ENCODE measurements at regions of chr12 and their contacts with region 1.

Region 1: GRCh38 chr12:107558141-107558815 is 127.3 kb upstream of the PWP1 start:
- DNase-seq: no peak
- ATAC-seq: no peak
- H3K4me3 ChIP-seq: no peak overlapping the region
- H3K27ac ChIP-seq: no peak overlapping the region
- H3K4me1 ChIP-seq: no peaks in the 10 kb centered on the region
- CTCF ChIP-seq: no peak
- EP300 ChIP-seq: no peak
- POLR2A ChIP-seq: no peak
- RAD21 ChIP-seq: no peak

Region 2: GRCh38 chr12:107545737-107546353 is 12.4 kb before region 1 on chr12:
- CTCF ChIA-PET with region 1: interaction called, 14 read pairs
- POLR2A ChIA-PET with region 1: no interaction called
- DNase-seq: no peak
- ATAC-seq: no peak
- H3K4me3 ChIP-seq: no peak overlapping the region
- H3K27ac ChIP-seq: no peak overlapping the region
- H3K4me1 ChIP-seq: no peaks in the 10 kb centered on the region
- CTCF ChIP-seq: no peak
- EP300 ChIP-seq: no peak
- POLR2A ChIP-seq: no peak
- RAD21 ChIP-seq: no peak

Region 3: DNA sequence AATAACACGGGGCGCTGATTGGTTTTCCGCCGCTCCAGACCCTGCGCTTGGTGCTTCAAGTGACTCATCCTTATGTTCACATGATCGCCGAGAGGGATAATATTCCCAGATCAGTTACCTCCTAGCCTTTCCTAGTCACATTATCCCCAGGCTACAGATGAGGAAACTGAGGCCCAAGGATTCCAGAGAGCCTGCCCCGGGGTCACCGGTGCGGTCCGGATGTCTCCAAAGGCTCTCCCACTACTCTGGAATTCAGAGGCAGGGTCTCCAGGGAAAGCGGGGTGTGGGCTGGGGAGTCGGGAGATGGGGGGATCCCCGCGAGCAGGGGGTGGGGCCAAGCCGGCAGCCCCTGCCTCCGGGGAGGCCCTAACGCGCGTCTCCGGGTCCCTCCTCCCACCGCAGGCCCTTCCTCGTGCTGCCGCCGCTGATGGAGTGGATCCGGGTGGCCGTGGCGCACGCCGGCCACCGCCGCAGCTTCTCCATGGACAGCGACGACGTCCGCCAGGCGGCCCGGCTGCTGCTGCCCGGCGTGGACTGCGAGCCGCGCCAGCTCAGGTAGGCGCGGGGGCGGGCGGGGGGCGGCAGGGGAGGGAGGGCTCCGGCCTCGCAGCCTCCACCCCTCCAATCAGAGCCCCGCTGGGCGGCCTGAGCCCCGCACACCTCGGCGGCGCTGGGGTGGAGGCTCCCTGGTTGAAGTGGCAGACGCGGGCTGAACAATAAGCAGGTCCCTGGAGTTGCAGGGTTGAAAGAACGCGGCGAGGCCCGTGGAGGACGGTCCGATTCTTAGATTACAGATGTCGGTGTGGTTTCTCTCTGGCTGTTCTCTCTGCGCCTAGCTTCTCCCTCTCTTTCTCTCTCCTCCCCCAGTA is 22.7 kb after region 1 on chr12:
- CTCF ChIA-PET with region 1: no interaction called
- POLR2A ChIA-PET with region 1: no interaction called
- DNase-seq: no peak
- ATAC-seq: no peak
- H3K4me3 ChIP-seq: no peak overlapping the region
- H3K27ac ChIP-seq: no peak overlapping the region
- H3K4me1 ChIP-seq: no peaks in the 10 kb centered on the region
- CTCF ChIP-seq: no peak
- EP300 ChIP-seq: no peak
- POLR2A ChIP-seq: no peak
- RAD21 ChIP-seq: no peak